ENCODE measurements at regions of chr4 and their contacts with region 1.

Region 1: DNA sequence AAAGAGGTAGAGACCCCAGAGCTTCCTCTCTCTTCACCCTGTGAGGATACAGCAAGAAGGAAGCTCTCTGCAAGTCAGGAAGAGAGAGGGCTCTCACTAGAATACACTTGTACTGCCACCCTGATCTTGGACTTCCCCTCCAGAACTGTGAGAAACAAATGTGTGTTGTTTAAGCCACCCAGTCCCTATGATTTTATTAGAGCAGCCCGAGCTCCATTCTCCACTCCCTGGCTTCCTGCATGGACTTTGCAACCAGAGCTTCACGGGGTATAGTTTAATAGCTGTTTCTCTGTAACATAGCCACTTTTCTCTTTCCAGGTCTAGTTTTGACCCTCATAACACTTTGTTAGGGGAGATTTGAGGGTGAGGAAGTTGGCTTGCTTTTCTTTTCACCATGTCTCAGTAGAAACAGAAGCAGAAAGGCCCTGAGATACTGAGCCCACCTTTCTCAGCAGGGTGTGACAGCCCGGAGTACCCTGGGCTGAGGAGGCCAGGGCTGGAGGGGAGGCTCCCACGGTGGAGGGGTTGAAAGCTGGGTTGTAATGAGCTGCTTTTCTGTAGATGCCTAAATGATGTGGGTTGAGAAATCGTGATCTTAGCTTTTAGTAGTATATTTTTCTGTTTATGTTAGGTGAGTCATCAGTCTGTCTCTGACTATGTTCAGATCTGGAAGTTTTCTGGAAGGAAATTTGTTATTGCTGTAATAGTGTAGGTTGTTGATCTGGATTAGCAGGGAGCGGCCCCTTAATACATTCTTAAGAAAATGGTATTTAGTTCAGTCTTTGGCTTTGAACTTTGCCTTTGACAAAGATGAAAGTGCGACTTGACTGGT is 118.6 kb downstream of the PTTG2 start:
- DNase-seq: no peak
- H3K4me3 Mint-ChIP-seq: no peak overlapping the region
- H3K27ac Mint-ChIP-seq: peak overlapping the region; percentile 77
- H3K4me1 Mint-ChIP-seq: peaks cover 30% of the 10 kb centered on the region
- H3K27me3 Mint-ChIP-seq: no peaks in the 10 kb centered on the region

Region 2: DNA sequence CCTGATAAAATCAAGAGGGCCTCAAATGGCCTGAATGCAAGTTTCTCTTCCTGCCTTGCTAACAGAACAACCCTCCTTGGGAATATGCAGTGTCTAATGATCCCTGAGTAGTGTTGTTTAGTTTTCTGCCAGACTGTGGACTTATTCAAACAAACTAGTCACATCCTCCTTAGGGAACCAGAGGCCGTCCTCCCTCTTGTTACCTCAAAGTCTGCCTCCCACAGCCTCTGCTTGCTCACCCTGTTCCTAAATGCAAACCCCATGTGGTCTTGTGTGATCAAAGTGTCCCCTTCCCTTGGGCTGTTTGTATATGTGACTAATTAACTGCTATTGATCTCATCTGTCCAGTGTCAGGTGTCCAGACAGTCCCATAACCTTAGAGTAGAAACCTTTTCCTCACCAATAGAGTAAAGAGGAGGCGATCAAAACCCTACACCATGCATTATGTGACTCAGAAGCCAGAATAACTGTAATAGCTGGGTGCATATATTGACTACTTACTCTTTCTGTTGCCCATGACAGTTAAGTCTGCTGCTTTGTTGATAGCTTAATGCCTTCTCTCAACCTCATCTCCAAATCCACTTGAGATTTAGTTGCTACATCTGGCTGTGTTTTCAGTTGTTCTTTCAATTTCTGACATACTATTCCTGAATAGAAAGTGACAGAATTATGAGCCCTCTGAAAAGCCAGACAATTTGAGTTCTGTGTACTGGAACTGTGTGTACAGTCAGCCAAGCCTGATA is 1307.2 kb before region 1 on chr4:
- intact Hi-C with region 1: no loop called
- DNase-seq: no peak
- H3K4me3 Mint-ChIP-seq: no peak overlapping the region
- H3K27ac Mint-ChIP-seq: no peak overlapping the region
- H3K4me1 Mint-ChIP-seq: peaks cover 12% of the 10 kb centered on the region
- H3K27me3 Mint-ChIP-seq: peaks cover under 1% of the 10 kb centered on the region

Region 3: GRCh38 chr4:38091636-38092035 is 12.8 kb after region 1 on chr4:
- intact Hi-C with region 1: loop called (anchors 2 kb)
- DNase-seq: no peak
- H3K4me3 Mint-ChIP-seq: no peak overlapping the region
- H3K27ac Mint-ChIP-seq: no peak overlapping the region
- H3K4me1 Mint-ChIP-seq: peaks cover 23% of the 10 kb centered on the region
- H3K27me3 Mint-ChIP-seq: no peaks in the 10 kb centered on the region

Region 4: GRCh38 chr4:38449506-38450174 is 370.8 kb after region 1 on chr4:
- intact Hi-C with region 1: no loop called
- DNase-seq: no peak
- H3K4me3 Mint-ChIP-seq: no peak overlapping the region
- H3K27ac Mint-ChIP-seq: no peak overlapping the region
- H3K4me1 Mint-ChIP-seq: peaks cover 32% of the 10 kb centered on the region
- H3K27me3 Mint-ChIP-seq: peaks cover 6% of the 10 kb centered on the region